K562 (cell line): ENCODE measurements at regions of chr3 and their contacts with region 1.

Region 1: DNA sequence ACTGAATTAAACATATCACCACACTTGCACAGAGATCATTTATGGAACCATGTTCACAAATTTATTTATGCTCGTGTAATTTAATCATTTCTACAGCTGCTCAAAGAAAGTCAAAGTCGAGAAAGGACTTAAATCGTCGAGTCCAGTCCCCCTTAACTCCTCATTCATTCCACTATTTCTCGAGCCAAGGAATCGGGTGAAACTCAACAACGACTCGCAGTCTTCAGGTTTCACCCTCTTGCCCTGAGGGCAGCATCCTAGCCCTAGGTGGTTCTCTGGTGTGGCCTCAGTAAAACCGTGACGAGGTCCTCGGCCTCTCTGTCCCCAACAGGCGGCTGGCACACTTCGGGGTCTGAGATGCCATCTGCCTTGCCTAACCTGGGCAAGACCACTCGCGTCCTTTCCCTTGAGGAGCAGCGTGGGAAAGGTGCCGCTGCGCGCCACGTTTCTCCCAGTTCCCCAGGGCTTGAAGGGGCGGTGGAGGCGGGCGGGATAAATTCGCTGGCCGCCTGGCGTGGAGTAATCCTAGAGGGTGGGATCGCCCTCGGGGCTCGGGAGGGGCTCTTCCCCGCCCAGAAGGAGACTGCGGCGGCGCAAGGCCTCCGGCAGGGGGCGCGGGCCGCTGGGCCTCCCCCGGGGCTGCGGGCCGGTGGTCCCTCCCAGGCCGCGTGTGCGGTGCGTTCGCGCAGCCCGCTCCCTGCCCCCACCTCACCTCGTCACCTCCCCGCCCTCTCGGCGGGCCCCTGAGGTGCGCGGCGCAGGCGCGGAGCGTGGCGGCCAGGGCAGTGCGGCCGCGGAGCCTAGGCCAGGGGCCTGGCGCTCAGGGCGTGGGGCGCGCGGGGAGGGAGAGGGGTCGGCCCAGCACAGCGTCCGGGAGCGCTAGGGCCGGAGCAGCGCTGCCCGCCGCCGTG is at the start of gene ZNF639:
- DNase-seq: peak; percentile 93 to 98 (median 97)
- ATAC-seq: peak; percentile 87
- H3K4me3 ChIP-seq: peak within 1 kb of the TSS; percentile 94
- H3K27ac ChIP-seq: peak within 1 kb of the TSS; percentile 96
- H3K4me1 ChIP-seq: peaks cover 15 to 23% of the 10 kb centered on the region in 2 experiments; a peak in 4 of 5 replicates
- H3K27me3 ChIP-seq: no peaks in the 10 kb centered on the region
- CTCF ChIP-seq: peak; percentile 69 to 86 (median 74)
- EP300 ChIP-seq: no peak
- POLR2A ChIP-seq: peak; percentile 37
- RAD21 ChIP-seq: peak; percentile 48 to 63
- polyA plus RNA-seq, gene ZNF639: 17.6 to 21.5 TPM

Region 2: DNA sequence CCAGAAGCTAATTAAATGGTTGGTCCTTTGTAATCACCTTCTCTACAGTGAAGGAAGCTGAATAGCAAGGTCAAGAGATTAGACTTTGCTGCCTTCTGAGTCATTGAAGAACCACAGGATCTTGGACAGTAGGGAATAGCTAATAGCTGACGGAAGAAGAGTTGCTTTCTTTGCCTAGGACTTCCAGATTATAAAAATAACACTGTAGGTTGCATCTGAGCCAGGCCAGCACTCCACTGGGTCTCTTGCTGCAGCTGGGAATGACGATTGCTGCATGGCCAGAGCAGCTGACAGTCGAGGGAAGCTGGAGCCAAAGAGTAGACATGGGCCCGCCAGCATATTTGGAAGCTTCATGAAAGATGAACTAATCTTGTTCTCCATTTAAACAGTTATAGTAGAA is 867.8 kb before region 1 on chr3:
- CTCF ChIA-PET with region 1: no interaction called
- POLR2A ChIA-PET with region 1: interaction called, 4 read pairs
- in situ Hi-C with region 1: loop called (anchors 25 kb)
- intact Hi-C with region 1: no loop called
- DNase-seq: no peak
- ATAC-seq: no peak
- H3K4me3 ChIP-seq: no peak overlapping the region
- H3K27ac ChIP-seq: no peak overlapping the region
- H3K4me1 ChIP-seq: no peaks in the 10 kb centered on the region
- H3K27me3 ChIP-seq: no peaks in the 10 kb centered on the region
- CTCF ChIP-seq: no peak
- EP300 ChIP-seq: no peak
- POLR2A ChIP-seq: no peak
- RAD21 ChIP-seq: no peak

Region 3: GRCh38 chr3:178966299-178967176 is 356.0 kb before region 1 on chr3:
- CTCF ChIA-PET with region 1: no interaction called
- POLR2A ChIA-PET with region 1: no interaction called
- in situ Hi-C with region 1: no loop called
- intact Hi-C with region 1: loop called (anchors 5 kb)
- DNase-seq: peak in 2 of 4 experiments; percentile 8 to 11
- ATAC-seq: 0 out of 3 replicates have a peak, but pooled peaks have one; percentile 38
- H3K4me3 ChIP-seq: no peak overlapping the region
- H3K27ac ChIP-seq: no peak overlapping the region
- H3K4me1 ChIP-seq: no peaks in the 10 kb centered on the region
- H3K27me3 ChIP-seq: no peaks in the 10 kb centered on the region
- CTCF ChIP-seq: peak in 2 of 3 experiments; percentile 28 to 70; a peak in 4 of 6 replicates
- EP300 ChIP-seq: no peak
- POLR2A ChIP-seq: no peak
- RAD21 ChIP-seq: peak; percentile 89 to 90

Region 4: DNA sequence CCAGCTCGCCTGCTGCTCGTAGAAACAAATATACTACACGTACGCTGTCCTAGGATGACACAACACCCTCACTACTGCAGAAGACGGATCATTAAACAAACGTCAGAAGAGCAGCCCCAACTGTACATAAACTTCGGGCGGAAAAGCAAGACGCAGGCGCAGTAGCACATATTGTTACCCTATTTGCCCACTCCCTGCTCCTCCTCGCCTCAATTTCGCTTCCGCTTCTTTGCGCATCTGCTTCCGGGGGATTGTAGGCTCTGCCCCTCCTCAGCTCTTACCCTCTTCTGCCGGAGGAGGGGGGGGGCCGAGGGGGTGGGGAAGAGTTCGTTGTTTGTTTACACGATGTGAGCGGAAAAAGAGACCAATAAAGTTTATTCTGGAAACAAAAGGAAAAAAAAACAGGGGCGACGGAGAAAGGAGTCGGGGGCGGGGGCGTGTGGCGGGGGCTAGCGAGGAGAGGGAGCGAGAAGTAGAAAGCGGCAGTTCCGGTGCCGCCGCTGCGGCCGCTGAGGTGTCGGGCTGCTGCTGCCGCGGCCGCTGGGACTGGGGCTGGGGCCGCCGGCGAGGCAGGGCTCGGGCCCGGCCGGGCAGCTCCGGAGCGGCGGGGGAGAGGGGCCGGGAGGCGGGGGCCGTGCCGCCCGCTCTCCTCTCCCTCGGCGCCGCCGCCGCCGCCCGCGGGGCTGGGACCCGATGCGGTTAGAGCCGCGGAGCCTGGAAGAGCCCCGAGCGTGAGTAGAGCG is 174.5 kb before region 1 on chr3 and contains the start of gene PIK3CA:
- CTCF ChIA-PET with region 1: interaction called, 4 read pairs
- POLR2A ChIA-PET with region 1: no interaction called
- in situ Hi-C with region 1: loop called (anchors 5 kb)
- intact Hi-C with region 1: no loop called
- DNase-seq: peak; percentile 90 to 98 (median 92)
- ATAC-seq: peak; percentile 90
- H3K4me3 ChIP-seq: peak within 1 kb of the TSS; percentile 95
- H3K27ac ChIP-seq: peak within 1 kb of the TSS; percentile 90
- H3K4me1 ChIP-seq: peaks cover 5 to 14% of the 10 kb centered on the region in 2 experiments; a peak in 3 of 5 replicates
- H3K27me3 ChIP-seq: no peaks in the 10 kb centered on the region
- CTCF ChIP-seq: no peak
- EP300 ChIP-seq: no peak; the same call in none of the 2 replicates
- POLR2A ChIP-seq: peak; percentile 81
- RAD21 ChIP-seq: no peak
- polyA plus RNA-seq, gene PIK3CA: 3.8 to 4.8 TPM

Region 5: DNA sequence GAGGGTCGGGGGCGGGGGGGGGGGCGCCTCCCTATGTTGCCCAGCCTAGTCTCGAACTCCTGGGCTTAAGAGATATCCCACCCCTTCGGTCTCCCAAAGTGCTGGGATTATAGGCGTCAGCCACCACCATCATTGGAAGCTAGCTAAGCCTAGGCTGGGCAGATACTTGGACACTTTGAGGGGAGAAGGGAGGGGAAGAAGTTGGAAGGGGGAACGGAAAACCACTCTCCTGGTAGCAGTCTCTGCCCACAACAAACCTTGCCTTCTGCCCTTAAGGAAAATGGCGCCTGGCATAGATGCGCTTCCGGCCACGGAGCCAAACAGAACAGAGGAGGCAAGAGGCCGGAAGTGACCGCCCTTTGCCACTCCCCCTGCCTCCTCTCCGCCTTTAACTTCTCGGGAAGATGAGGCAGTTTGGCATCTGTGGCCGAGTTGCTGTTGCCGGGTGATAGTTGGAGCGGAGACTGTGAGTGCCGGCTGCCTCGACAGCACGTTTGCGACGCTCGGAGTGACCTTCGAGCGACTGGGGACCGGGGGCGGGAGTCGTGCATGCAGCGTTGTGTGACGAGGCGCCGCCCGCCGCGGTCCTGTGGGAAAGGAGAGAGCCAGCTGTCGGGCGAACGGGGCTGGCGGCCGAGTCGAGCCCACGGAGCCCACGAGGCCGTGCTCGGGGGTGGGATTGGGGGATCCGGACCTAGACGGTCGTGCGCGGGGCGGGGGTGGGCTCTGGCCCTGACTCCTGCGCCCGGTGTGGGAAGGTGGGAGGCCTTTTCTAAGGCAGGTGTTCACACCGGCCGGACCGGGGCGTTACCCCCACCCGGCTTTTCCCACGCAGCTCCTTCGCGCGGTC is 25.0 kb after region 1 on chr3 and contains the start of gene MFN1:
- CTCF ChIA-PET with region 1: no interaction called
- POLR2A ChIA-PET with region 1: no interaction called
- in situ Hi-C with region 1: no loop called
- intact Hi-C with region 1: loop called (anchors 1 kb)
- DNase-seq: peak; percentile 80 to 96 (median 86)
- ATAC-seq: peak; percentile 98
- H3K4me3 ChIP-seq: peak within 1 kb of the TSS; percentile 81
- H3K27ac ChIP-seq: peak within 1 kb of the TSS; percentile 87
- H3K4me1 ChIP-seq: peaks cover 8 to 19% of the 10 kb centered on the region in 2 experiments; a peak in 4 of 5 replicates
- H3K27me3 ChIP-seq: no peaks in the 10 kb centered on the region
- CTCF ChIP-seq: no peak
- EP300 ChIP-seq: no peak
- POLR2A ChIP-seq: peak; percentile 87
- RAD21 ChIP-seq: no peak
- polyA plus RNA-seq, gene MFN1: 10.5 to 18.8 TPM

Region 6: GRCh38 chr3:179562591-179563270 is 240.2 kb after region 1 on chr3 and contains the start of gene ACTL6A:
- CTCF ChIA-PET with region 1: interaction called, 4 read pairs
- POLR2A ChIA-PET with region 1: interaction called, 14 read pairs
- in situ Hi-C with region 1: loop called (anchors 5 kb)
- intact Hi-C with region 1: loop called (anchors 1 kb)
- DNase-seq: peak; percentile 99 to 100 (median 99)
- ATAC-seq: peak; percentile 96
- H3K4me3 ChIP-seq: peak within 1 kb of the TSS; percentile 79
- H3K27ac ChIP-seq: peak within 1 kb of the TSS; percentile 93
- H3K4me1 ChIP-seq: peaks cover 8 to 9% of the 10 kb centered on the region in 2 experiments; a peak in 3 of 5 replicates
- H3K27me3 ChIP-seq: no peaks in the 10 kb centered on the region
- CTCF ChIP-seq: no peak
- EP300 ChIP-seq: no peak
- POLR2A ChIP-seq: peak; percentile 98
- RAD21 ChIP-seq: no peak
- polyA plus RNA-seq, gene ACTL6A: 229 to 243 TPM